Dendritic cell treated with granulocyte-macrophage colony-stimulating factor and Interleukin-4, amounts not matched to agents 40 ng/mL and 50 ng/mL, for 4 days (primary cell): ENCODE measurements at regions of chr10 and their contacts with region 1.

Region 1: GRCh38 chr10:29735596-29736318 is 101.0 kb upstream of the SVIL start:
- H3K4me3 Mint-ChIP-seq: peak overlapping the region; percentile 90
- H3K27ac Mint-ChIP-seq: peak overlapping the region; percentile 96
- H3K4me1 Mint-ChIP-seq: peaks cover 53% of the 10 kb centered on the region
- H3K27me3 Mint-ChIP-seq: peaks cover 20% of the 10 kb centered on the region

Region 2: DNA sequence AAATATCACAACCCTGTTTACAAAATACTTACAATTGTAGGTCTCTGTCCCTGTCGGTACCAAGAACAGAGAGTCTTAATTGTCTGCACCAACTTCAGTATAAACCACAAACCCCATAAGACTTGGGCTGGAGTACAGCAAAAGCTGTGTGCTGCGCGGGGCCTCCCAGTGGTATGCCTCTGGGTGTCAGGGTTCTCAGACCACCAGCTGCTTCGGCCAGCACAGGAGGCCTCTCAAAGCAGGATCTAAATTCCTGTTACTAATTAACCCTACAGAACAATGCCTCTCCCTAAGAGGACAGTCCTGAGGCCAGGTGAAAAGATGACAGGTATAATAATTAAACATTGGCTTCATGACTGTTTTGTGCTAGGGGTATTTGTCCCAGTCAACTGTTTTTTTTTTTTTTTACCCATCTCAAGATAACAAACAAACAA is 100.0 kb before region 1 on chr10:
- intact Hi-C with region 1: loop called (anchors 10 kb)
- H3K4me3 Mint-ChIP-seq: no peak overlapping the region
- H3K27ac Mint-ChIP-seq: peak overlapping the region; percentile 19
- H3K4me1 Mint-ChIP-seq: peaks cover 63% of the 10 kb centered on the region
- H3K27me3 Mint-ChIP-seq: no peaks in the 10 kb centered on the region

Region 3: GRCh38 chr10:29689001-29689400 is 46.8 kb before region 1 on chr10:
- intact Hi-C with region 1: loop called (anchors 10 kb)
- H3K4me3 Mint-ChIP-seq: peak overlapping the region; percentile 40
- H3K27ac Mint-ChIP-seq: peak overlapping the region; percentile 68
- H3K4me1 Mint-ChIP-seq: peaks cover 34% of the 10 kb centered on the region
- H3K27me3 Mint-ChIP-seq: no peaks in the 10 kb centered on the region

Region 4: GRCh38 chr10:29761916-29762315 is 26.2 kb after region 1 on chr10:
- intact Hi-C with region 1: loop called (anchors 2 kb)
- H3K4me3 Mint-ChIP-seq: no peak overlapping the region
- H3K27ac Mint-ChIP-seq: peak overlapping the region; percentile 97
- H3K4me1 Mint-ChIP-seq: peaks cover 62% of the 10 kb centered on the region
- H3K27me3 Mint-ChIP-seq: no peaks in the 10 kb centered on the region

Region 5: DNA sequence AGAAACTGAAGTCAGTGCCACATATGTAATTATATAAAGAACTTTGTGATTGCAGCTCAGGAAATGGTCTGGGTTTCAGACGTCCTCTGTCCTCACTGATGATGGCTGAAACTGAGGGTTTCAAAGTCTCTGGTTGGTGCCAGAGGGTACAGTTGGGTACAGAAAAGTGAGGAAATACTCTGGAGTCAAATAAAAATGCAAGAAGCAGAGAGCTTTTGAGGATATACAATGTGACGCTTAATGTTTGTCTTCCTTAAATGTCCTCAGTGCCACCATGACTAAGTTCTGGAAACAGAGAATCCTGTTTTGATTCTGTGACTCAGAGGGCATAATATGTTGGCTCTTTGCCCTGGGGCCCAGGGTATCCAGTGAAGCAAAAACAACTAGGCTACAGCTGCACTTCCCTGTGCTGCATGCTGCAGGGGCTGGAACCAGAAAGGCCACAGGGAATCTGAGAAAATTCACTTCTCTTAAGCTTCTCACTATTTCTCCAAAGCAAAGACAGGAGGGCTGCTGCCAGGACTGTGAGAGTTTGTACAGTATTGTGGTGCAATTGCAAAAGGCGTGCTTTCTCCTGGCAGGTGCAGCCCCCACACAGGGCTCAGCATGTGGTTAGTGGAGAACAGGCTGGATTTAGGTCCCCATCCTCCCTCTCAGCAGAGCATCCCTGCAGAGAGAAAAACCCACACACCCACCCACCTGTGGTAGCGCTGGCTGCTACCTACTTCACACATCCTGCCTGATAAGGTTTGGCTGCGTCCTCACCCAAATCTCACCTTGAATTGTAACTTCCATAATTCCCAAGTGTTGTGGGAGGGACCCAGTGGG is 68.5 kb after region 1 on chr10:
- intact Hi-C with region 1: no loop called
- H3K4me3 Mint-ChIP-seq: peak overlapping the region; percentile 17
- H3K27ac Mint-ChIP-seq: peak overlapping the region; percentile 82
- H3K4me1 Mint-ChIP-seq: peaks cover 59% of the 10 kb centered on the region
- H3K27me3 Mint-ChIP-seq: peaks cover 3% of the 10 kb centered on the region

Region 6: GRCh38 chr10:29857843-29858701 is 122.3 kb after region 1 on chr10:
- intact Hi-C with region 1: loop called (anchors 5 kb)
- H3K4me3 Mint-ChIP-seq: peak overlapping the region; percentile 24
- H3K27ac Mint-ChIP-seq: peak overlapping the region; percentile 58
- H3K4me1 Mint-ChIP-seq: peaks cover 21% of the 10 kb centered on the region
- H3K27me3 Mint-ChIP-seq: peaks cover 2% of the 10 kb centered on the region